ENCODE measurements at regions of chr15 and their contacts with region 1.

Region 1: GRCh38 chr15:64460206-64460734 is at the start of gene ZNF609:
- DNase-seq: peak; percentile 94
- ATAC-seq: peak; percentile 54
- H3K4me3 Mint-ChIP-seq: peak within 1 kb of the TSS; percentile 83
- H3K27ac Mint-ChIP-seq: peak within 1 kb of the TSS; percentile 92
- H3K4me1 Mint-ChIP-seq: peaks cover 80% of the 10 kb centered on the region
- H3K27me3 Mint-ChIP-seq: no peaks in the 10 kb centered on the region
- total RNA-seq, gene ZNF609: 39.8 to 44.5 TPM

Region 2: DNA sequence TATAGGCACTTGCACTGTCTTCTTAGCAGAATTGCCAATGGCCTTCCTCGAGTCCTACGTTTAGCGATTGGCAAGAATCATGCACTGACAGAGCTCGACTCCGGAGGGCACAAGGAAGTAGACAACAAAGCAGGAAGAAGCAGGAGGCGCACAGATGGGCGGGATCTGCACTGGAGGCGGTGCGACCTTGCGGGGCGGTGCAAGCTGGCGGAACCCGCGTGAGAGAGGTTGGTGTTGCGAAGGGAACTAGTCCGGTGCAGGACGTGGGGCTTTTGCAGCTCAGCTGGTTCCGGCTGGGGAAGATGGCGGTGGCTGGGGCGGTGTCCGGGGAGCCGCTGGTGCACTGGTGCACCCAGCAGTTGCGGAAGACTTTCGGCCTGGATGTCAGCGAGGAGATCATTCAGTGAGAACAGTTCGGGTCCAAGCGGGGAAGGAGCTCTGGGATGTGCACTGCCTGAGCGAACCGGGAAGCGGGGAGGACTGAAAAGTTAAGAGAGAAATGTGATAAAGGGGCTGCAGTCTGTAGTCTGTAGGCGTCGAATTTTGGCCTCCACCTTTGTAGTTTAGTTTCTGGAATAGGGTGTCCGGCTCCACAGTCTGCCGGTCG is 72.6 kb before region 1 on chr15 and contains the start of gene TRIP4:
- CTCF ChIA-PET with region 1: no interaction called
- POLR2A ChIA-PET with region 1: no interaction called
- intact Hi-C with region 1: loop called (anchors 1 to 5 kb)
- DNase-seq: peak; percentile 98
- ATAC-seq: peak; percentile 100
- H3K4me3 Mint-ChIP-seq: peak within 1 kb of the TSS; percentile 85
- H3K27ac Mint-ChIP-seq: peak within 1 kb of the TSS; percentile 91
- H3K4me1 Mint-ChIP-seq: peaks cover 17% of the 10 kb centered on the region
- H3K27me3 Mint-ChIP-seq: no peaks in the 10 kb centered on the region
- total RNA-seq, gene TRIP4: 13.1 to 19.6 TPM

Region 3: DNA sequence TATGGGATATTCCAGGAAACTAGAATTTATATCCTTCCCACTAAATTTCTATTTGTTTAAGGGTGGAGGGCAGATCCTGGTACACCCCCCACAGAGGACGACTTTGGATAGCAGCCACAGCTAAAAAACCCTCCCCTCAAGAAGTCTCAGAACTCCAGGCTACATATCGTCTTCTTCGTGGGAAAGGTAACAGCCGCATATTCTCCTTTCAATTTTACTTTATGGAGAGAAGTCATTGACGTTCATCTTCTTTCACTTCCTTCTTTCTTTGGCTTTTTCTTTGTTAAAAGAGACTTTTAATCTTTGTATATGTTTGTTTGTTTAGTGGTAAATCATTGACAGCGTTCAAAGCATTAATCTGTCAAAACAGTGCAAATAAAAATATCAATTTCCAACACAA is 36.3 kb before region 1 on chr15:
- CTCF ChIA-PET with region 1: no interaction called
- POLR2A ChIA-PET with region 1: no interaction called
- intact Hi-C with region 1: no loop called
- DNase-seq: no peak
- ATAC-seq: no peak
- H3K4me3 Mint-ChIP-seq: no peak overlapping the region
- H3K27ac Mint-ChIP-seq: no peak overlapping the region
- H3K4me1 Mint-ChIP-seq: peaks cover 22% of the 10 kb centered on the region
- H3K27me3 Mint-ChIP-seq: no peaks in the 10 kb centered on the region

Region 4: DNA sequence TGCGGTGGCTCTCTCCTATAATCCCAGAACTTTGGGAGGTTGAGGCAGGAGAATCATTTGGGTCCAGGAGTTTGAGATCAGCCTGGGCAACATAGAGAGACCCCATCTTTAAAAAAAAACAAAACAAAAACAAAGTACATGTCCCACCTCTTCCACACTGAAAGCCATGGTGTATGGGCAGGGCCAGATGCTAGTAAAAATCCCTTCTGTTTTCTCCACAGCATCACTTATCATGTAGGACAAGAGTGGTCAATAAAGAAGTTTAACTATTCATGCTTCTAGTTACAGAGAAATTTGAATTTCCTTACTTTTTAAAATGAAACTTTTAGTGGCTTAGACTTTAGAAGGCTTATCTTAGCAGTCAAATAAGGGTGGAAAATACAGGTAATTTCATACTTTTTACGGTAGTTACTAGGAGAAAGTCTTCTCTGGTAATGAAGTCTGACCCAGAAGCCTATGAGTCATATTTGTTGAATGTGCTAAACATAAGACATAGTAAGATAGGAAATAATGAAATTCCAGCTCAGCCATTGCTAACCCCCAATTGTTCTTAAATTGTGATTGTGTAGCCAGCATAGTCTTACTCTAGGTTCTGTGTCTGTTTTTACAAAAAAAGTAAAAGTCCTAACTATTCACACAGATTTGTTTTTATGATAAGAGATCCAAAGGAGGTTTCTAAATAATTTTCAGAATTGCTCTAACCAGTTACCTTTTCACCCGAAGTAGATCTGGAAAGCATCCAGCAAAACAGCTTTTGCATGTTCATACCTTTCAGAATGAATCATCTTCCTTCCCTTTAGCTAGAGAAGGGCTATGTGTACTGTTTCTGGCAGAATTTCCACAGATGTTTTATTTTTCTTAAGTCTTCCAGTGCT is 16.3 kb before region 1 on chr15:
- CTCF ChIA-PET with region 1: interaction called, 10 read pairs
- POLR2A ChIA-PET with region 1: interaction called, 8 read pairs
- intact Hi-C with region 1: loop called (anchors 1 kb)
- DNase-seq: no peak
- ATAC-seq: peak; percentile 90
- H3K4me3 Mint-ChIP-seq: peak overlapping the region; percentile 61
- H3K27ac Mint-ChIP-seq: peak overlapping the region; percentile 93
- H3K4me1 Mint-ChIP-seq: peaks cover 63% of the 10 kb centered on the region
- H3K27me3 Mint-ChIP-seq: no peaks in the 10 kb centered on the region

Region 5: GRCh38 chr15:64532521-64533315 is 72.4 kb after region 1 on chr15:
- CTCF ChIA-PET with region 1: no interaction called
- POLR2A ChIA-PET with region 1: interaction called, 3 read pairs
- intact Hi-C with region 1: loop called in 1 of 2 experiments (anchors 2 kb)
- DNase-seq: peak; percentile 65
- ATAC-seq: peak; percentile 58
- H3K4me3 Mint-ChIP-seq: peak overlapping the region; percentile 32
- H3K27ac Mint-ChIP-seq: peak overlapping the region; percentile 86
- H3K4me1 Mint-ChIP-seq: peaks cover 76% of the 10 kb centered on the region
- H3K27me3 Mint-ChIP-seq: no peaks in the 10 kb centered on the region

Region 6: DNA sequence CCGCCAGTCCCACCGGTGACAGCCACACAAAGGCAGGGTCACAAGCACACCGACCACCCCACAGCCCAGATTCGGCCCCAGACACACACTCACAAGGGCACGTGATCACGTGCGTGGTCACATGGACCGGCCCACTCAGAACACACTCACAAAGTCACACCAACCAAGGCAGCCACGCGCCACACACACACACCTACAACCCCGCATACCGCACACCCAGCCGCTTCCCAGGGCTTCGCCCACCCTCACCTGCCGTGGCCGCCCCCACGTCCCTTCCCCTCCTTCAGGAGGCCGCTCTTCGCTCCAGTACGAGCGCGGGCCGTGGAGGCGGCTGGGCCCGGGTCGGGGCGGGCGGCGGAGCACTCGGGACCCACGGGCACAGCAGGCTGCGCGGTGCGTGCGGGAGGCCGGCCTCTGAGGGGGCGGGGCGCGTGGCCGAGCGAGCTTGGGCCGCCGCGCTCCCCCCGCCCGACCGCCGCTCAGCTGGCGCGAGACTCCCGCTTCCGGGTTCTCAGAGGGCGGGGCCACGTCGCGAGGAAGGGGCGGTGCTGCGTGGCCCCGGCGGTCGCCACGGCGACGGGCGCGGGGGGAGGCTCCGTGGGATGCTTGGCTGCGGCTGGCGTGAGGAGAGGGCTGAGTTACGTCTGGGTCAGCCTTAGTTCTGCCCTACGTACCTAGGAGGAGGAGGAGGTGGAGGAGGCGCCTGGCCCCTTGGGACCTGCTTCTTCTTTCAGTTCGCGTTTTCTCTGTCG is 529.3 kb after region 1 on chr15 and contains the start of gene SPG21:
- CTCF ChIA-PET with region 1: no interaction called
- POLR2A ChIA-PET with region 1: no interaction called
- intact Hi-C with region 1: loop called in 1 of 2 experiments (anchors 2 kb)
- DNase-seq: peak; percentile 94
- ATAC-seq: peak; percentile 96
- H3K4me3 Mint-ChIP-seq: peak within 1 kb of the TSS; percentile 96
- H3K27ac Mint-ChIP-seq: peak within 1 kb of the TSS; percentile 88
- H3K4me1 Mint-ChIP-seq: peaks cover 37% of the 10 kb centered on the region
- H3K27me3 Mint-ChIP-seq: no peaks in the 10 kb centered on the region
- total RNA-seq, gene SPG21: 74.1 to 79.1 TPM

Measured in activated CD4-positive, alpha-beta T cell treated with anti-CD3 and anti-CD28 coated beads for 36 hours (primary cell).